ENCODE measurements at regions of chr2 and their contacts with region 1.

Region 1: DNA sequence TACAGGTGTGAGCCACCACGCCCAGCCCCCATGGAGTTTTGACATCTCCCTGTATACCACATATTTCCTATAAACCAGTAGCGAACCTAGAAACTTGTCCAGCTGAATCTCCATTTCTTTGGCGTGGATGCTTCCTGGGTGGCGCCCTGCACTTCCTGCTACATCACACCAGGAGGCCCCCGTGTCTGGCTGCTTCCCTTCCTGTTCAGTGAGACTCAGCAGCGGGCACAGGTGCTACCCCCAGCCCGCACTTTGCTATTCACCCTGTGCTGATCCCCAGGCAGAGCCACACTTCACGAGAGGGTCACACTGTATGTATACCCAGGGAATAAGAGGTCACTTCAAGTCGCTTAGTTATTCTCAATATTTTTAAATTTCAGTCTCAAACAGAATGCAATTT is 35.0 kb downstream of the CYP27C1 start:
- DNase-seq: no peak
- ATAC-seq: no peak
- H3K4me3 ChIP-seq: no peak overlapping the region
- H3K27ac ChIP-seq: no peak overlapping the region
- H3K4me1 ChIP-seq: no peaks in the 10 kb centered on the region
- H3K27me3 ChIP-seq: peaks cover 28% of the 10 kb centered on the region
- CTCF ChIP-seq: no peak
- POLR2A ChIP-seq: no peak
- RAD21 ChIP-seq: no peak

Region 2: DNA sequence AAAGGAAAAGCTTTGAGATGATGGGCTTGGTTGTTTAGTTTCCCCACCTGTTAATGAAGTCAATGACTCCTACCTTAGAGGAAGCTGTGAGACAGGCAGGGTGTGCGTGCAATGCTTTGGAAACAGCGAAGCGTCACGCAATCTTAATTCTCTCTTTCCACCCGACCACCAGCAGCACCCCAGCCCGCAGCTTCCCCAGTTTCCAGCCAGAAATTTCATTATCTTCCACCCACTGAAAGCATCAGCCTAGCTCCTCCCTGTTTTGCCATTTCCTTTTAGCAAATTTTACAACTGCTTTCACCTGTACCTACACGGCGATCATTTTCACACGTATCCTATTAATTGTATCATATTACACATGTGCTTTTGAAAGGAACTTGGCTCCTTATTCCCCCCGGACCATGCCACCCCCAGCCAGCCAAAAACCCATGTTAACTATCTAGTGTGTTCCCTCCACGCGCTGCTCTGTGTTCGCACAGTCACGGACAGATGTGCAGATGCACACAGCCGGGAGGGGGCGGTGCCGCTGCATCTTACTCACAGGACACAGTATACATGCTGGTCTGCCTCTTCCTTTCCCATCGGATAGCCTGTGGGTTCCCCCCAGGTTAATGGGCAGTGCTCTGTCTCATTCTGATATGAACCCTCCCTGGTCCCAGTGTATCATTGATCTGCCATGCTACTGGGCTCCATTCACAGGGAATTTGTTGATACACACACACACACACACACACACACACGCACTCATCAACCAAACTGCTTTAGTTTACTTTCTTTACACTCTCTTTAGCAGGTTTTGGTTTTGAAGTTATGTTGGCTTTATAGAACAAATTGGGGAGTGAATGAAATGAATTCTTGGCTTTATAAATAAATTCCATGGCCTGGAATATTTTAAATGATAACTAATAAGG is 12.6 kb after region 1 on chr2:
- CTCF ChIA-PET with region 1: no interaction called
- POLR2A ChIA-PET with region 1: no interaction called
- dilution Hi-C with region 1: no loop called
- in situ Hi-C with region 1: no loop called
- intact Hi-C with region 1: loop called (anchors 1 kb)
- DNase-seq: peak; percentile 50
- ATAC-seq: peak; percentile 82
- H3K4me3 ChIP-seq: no peak overlapping the region
- H3K27ac ChIP-seq: no peak overlapping the region
- H3K4me1 ChIP-seq: peaks cover 8% of the 10 kb centered on the region
- H3K27me3 ChIP-seq: peaks cover 10% of the 10 kb centered on the region
- CTCF ChIP-seq: peak; percentile 56
- POLR2A ChIP-seq: no peak
- RAD21 ChIP-seq: peak; percentile 70

Region 3: DNA sequence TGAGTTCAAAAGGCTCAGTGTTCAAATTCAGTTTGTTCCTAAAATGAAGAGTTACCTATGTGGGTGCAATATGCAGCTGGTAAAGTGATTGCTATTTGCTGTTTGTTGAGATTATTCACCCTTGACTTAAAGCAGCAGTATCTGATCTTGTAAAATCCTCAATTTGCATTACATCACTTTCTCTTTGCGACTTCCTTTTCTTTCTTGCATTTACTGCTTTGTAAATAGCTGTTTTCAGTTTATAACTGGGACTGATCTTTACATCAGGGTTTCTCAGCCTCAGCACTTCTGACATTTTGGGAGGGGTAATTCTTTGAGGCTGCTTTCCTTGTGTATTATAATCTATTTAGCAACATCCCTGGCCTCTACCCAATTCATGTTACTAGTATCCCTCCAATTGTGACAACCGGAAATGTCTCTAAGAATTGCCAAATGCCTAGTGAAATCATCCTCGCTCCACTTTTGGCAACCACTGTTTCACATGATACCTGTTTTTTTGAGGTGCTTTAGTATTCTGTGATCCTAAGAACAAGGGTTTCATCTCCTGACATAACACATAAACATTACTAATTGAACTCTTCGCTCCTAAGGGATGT is 121.0 kb after region 1 on chr2:
- CTCF ChIA-PET with region 1: no interaction called
- POLR2A ChIA-PET with region 1: no interaction called
- dilution Hi-C with region 1: no loop called
- in situ Hi-C with region 1: no loop called
- intact Hi-C with region 1: no loop called
- DNase-seq: no peak
- ATAC-seq: no peak
- H3K4me3 ChIP-seq: no peak overlapping the region
- H3K27ac ChIP-seq: no peak overlapping the region
- H3K4me1 ChIP-seq: no peaks in the 10 kb centered on the region
- H3K27me3 ChIP-seq: no peaks in the 10 kb centered on the region
- CTCF ChIP-seq: no peak
- POLR2A ChIP-seq: no peak
- RAD21 ChIP-seq: no peak